Head of caudate nucleus (tissue), 42 donors: ENCODE measurements at regions of chr1 and their contacts with region 1.

Region 1: GRCh38 chr1:179293340-179294327 is at the start of gene SOAT1:
- DNase-seq: peak; percentile 88 to 98 (median 96)

Region 2: GRCh38 chr1:179081687-179082332 is 211.8 kb before region 1 on chr1 and contains the start of gene TOR3A:
- intact Hi-C with region 1: loop called (anchors 5 kb)
- DNase-seq: peak; percentile 86 to 98 (median 95)

Region 3: DNA sequence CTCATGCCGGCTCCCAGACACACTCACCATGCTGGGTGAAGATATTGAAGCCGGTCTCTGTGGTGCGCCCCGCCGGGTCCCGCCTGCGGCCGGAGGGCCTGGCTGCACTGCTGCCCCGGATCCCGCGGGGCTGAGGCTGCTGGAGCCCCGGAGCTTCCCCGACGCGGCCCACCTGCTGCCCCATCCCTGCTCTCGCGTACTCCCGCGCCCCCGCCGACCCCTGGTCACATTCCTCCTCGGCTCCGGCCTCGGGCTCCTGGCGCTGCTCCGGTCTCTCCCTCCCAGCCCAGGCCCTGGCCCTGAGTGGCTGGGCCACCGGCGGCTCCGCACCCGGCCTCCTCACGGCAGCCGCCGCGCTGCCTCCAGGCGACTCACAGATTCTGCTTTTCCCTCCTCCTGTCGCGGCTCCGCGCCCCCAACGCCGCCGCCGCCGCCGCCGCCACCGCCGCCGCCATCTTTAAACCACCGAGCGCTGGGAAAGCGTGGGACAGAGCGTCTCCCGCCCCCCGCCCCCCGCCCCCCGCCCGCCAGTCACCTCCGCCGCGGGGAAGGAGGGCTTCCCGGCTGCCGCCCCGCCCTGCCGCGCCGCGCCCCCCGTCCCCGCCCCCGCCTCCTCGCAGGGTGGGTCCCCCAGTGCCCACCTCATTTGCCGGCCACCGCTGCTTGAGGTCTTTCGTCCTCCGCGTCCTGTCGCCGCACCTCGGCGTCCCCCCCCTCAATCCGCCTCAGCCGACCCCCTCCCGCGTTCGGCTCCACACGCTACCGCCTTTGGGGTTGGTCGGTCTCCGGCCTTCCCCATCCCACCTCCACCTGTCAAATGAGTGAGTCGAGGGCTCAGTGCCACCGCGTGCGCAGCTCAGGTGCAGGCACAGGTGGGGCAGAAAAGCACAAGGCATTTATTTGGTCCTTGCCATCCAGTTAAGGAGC is 64.2 kb before region 1 on chr1 and contains the start of gene ABL2:
- intact Hi-C with region 1: loop called (anchors 10 kb)
- DNase-seq: peak in 40 of 42 donors; percentile 19 to 82 (median 66)

Region 4: DNA sequence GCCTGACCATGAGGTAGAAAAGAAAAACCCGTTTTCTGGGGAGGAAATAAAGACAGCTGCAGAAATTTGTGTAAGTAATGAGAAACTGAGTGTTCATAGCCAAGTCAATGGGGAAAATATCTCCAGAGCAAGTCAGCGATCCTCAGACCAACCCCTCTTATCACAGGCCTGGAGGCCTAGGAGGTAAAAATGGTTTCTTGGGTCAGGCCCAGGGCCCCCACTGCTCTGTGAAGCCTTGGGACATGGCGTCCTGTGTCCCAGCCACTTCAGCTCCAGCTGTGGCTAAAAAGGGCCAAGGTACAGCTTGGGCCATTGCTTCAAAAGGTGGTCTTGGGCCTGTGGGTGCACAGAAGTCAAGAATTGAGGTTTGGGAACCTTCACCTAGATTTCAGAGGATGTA is 181.1 kb after region 1 on chr1:
- intact Hi-C with region 1: no loop called
- DNase-seq: no peak